Left colon (tissue), 2 donors: ENCODE measurements at regions of chr11 and their contacts with region 1.

Region 1: GRCh38 chr11:126214841-126215240 is 3.3 kb downstream of the FAM118B start:
- DNase-seq: peak; percentile 26 to 59
- ATAC-seq: peak; percentile 66

Region 2: DNA sequence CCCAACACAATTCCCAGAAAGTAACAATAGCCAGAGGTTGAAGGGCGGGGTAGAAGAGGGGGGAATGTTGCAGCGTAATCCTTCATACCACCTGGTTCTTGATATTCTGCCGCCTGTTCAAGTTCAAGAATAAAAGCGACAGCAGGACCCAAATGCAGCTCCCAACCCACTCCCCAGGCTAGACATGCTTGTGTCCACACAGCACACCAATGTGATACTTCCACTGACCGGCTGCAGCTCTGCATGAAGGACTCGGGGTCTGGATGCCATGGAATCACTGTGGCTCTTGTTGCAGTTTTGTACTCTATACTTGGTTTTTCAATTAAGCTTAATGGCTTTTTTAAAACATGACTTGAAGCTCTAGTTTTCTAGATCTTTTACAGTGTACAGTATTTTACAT is 47.4 kb after region 1 on chr11:
- intact Hi-C with region 1: loop called in 1 of 2 experiments (anchors 5 kb)
- DNase-seq: no peak
- ATAC-seq: no peak